GM10248 (cell line): ENCODE measurements at regions of chr13 and their contacts with region 1.

Region 1: DNA sequence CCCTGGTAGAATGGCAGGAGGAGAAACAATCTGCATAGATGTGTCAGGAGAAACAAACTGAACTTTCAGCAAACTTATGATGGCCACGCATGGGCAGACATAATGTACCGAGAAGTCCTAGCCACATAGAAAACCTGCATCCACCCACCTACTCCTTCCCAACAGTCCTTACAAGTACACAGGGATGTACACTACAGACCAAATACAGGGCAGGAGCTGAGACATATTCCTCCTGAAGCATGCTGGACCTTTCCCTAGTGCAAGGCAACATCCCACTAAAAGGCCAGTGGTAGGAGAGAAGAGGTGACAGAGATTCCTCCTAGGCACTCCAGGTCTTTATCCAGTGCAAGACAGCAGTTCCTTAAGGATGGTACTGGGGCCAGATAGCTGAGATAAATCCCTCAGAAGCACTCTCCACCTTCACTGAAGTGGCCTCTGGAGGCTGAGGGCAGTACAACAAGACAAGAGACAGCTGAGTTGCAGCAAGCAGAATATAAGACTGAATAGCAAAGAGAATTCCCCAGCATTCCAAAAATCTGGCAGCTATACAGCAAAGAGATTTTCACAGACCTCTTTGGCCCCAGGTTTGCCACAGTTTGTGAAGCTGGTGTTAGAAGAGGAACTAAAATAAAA is 18.3 kb downstream of the VWA8 start:
- DNase-seq: no peak
- CTCF ChIP-seq: peak; percentile 27

Region 2: DNA sequence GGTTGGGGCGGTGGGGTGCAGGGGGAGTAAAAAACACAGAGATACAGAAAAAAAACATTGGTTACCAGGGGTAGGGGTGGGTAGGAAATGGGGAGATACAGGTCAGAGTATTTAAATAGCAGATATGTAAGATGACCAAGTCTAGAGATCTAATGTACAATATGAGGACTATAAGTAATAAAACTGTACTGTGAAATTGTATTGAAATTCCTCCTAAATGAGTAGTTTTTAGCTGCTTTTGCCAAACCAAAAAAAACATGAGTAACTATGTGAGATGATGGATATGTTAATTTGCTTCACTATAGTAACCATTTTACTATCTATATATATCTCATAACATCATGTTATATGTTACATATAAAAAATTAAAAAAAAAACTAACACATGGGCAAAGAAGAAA is 11.2 kb before region 1 on chr13:
- CTCF ChIA-PET with region 1: interaction called, 20 read pairs
- POLR2A ChIA-PET with region 1: no interaction called
- DNase-seq: no peak
- CTCF ChIP-seq: no peak

Region 3: GRCh38 chr13:41955605-41956004 is 13.0 kb after region 1 on chr13:
- CTCF ChIA-PET with region 1: interaction called, 13 read pairs
- POLR2A ChIA-PET with region 1: no interaction called
- DNase-seq: no peak
- CTCF ChIP-seq: no peak

Region 4: GRCh38 chr13:41960639-41961465 is 18.3 kb after region 1 on chr13 and contains the start of gene VWA8:
- CTCF ChIA-PET with region 1: interaction called, 13 read pairs
- POLR2A ChIA-PET with region 1: no interaction called
- DNase-seq: peak; percentile 89
- CTCF ChIP-seq: no peak